Sigmoid colon (tissue), 7 donors: ENCODE measurements at regions of chr2 and their contacts with region 1.

Region 1: GRCh38 chr2:181742922-181743722 is 62.8 kb upstream of the NEUROD1 start:
- DNase-seq: no peak
- H3K4me3 ChIP-seq: no peak overlapping the region
- H3K27ac ChIP-seq: no peak overlapping the region
- H3K4me1 ChIP-seq: no peaks in the 10 kb centered on the region
- H3K27me3 ChIP-seq: no peaks in the 10 kb centered on the region
- CTCF ChIP-seq: peak; percentile 38 to 72 (median 64)
- EP300 ChIP-seq: no peak
- POLR2A ChIP-seq: no peak

Region 2: DNA sequence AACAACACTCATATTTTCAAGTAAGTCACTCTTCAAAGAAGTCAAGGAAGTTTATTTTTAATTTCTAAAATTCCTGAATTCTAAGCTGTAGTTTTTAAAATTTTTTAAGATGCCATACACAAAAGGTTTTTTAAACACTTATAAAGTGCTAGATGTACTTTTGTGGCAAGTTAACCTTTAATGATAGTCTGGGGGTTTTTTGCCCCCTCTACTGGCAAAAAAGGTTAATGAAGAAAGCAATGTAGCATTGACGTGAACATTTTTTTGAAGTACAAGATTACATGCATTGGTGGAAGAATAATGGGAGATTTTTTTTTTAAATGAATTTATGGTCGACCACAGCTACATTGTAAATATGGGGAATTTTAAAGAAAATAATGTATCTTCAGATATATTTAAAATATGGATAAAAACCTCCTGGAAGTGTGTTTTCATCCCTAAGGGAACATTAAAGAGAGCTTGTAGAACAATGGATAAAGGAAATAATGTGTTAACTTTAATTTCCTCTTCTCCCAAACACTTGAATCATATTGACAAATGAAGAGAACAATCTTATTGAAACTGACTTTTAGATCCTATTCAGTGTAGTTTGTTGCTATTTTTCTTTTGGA is 161.0 kb after region 1 on chr2:
- intact Hi-C with region 1: loop called (anchors 1 kb)
- DNase-seq: no peak
- H3K4me3 ChIP-seq: no peak overlapping the region
- H3K27ac ChIP-seq: no peak overlapping the region
- H3K4me1 ChIP-seq: peaks cover 0 to 45% (median 15%) of the 10 kb centered on the region in 4 donors
- H3K27me3 ChIP-seq: no peaks in the 10 kb centered on the region
- CTCF ChIP-seq: peak in 3 of 4 experiments; percentile 23 to 56 (median 38)
- EP300 ChIP-seq: no peak
- POLR2A ChIP-seq: no peak

Region 3: GRCh38 chr2:181953881-181954537 is 210.9 kb after region 1 on chr2:
- intact Hi-C with region 1: loop called (anchors 2 kb)
- DNase-seq: no peak
- H3K4me3 ChIP-seq: peak overlapping the region in 3 of 4 donors; percentile 24 to 31 (median 31)
- H3K27ac ChIP-seq: no peak overlapping the region
- H3K4me1 ChIP-seq: peaks cover 0 to 15% (median 0%) of the 10 kb centered on the region in 4 donors
- H3K27me3 ChIP-seq: no peaks in the 10 kb centered on the region
- CTCF ChIP-seq: peak in 3 of 4 experiments; percentile 27 to 67 (median 42)
- EP300 ChIP-seq: no peak
- POLR2A ChIP-seq: no peak

Region 4: DNA sequence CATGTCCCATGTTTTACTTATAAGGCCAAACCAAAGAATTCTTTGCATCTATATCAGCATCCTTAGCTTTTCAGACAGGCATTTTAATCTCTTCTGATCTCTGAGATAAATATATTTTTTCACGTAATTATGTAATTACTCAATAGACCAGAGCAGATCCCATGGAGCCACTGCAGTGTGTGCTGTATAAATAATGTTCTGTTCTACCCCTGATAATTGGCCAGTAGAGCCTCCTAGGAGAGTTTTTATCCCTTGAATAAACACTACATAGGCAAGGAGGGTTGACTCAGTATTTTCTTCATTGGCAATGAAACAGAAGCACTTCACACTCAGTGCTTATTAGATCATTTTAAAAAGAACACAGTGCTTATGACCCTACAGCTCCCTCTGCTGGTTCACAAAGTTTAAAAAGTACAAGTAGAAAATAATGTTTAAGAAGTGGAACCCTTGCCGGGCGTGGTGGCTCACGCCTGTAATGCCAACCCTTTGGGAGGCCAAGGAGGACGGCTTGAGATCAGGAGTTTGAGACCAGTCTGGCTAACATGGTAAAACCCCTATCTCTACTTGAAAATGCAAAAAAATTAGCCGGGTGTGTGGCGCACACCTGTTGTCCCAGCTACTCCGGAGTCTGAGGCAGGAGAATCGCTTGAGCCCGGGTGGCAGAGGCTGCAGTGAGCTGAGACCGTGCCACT is 334.5 kb after region 1 on chr2:
- intact Hi-C with region 1: loop called (anchors 2 kb)
- DNase-seq: no peak
- H3K4me3 ChIP-seq: no peak overlapping the region
- H3K27ac ChIP-seq: no peak overlapping the region
- H3K4me1 ChIP-seq: peaks cover 0 to 5% (median 2%) of the 10 kb centered on the region in 4 donors
- H3K27me3 ChIP-seq: no peaks in the 10 kb centered on the region
- CTCF ChIP-seq: peak; percentile 13 to 62 (median 40)
- EP300 ChIP-seq: no peak
- POLR2A ChIP-seq: no peak